ENCODE measurements at regions of chr1 and their contacts with region 1.

Region 1: GRCh38 chr1:234925440-234926263 is 203.0 kb downstream of the TOMM20 start:
- DNase-seq: no peak
- ATAC-seq: peak; percentile 27
- H3K4me3 Mint-ChIP-seq: peak overlapping the region; percentile 59
- H3K27ac Mint-ChIP-seq: peak overlapping the region; percentile 86
- H3K4me1 Mint-ChIP-seq: peaks cover 53% of the 10 kb centered on the region
- H3K27me3 Mint-ChIP-seq: no peaks in the 10 kb centered on the region

Region 2: DNA sequence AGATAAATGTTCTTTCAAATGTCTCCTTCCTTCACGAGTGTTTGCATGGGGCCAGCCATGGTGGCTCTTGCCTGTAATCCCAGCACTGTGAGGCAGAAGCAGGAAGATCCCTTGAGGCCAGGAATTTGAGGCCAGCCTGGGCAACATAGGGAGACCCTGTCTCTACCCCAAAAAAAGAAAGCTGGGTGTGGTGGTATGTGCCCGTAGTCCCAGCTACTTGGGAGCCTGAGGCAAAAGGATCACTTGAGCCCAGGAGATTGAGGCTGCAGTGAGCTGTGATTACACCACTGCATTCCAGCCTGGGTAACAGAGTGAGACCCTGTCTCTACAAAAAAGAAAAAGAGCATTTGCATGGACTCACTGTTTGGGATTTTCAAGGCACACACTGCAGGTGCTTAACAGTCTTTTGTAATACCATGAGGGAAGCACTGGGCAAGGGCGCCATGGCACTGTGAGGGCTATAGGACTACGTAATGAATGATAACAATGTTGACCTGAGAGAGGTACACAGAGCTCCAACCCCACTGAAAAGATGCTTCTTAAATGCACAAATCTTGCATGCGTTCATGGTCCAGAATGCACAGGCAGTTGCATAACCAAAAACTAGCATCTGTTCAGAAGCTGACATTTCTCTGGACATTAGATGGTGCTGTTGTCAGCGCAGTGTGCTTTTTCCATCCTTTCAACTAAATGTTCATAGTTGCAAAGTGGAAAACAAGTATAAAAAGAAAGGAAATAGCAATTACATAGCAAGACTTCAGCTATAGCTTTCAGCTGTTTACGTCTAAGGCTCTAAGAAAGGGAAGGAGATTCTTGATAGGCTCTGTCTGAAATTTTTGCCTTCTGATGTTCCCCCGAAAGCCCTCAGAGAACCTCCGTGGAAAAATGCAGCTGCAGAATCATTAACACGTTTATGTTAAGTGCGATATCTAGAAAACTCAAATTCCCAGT is 438.9 kb before region 1 on chr1:
- CTCF ChIA-PET with region 1: no interaction called
- POLR2A ChIA-PET with region 1: no interaction called
- intact Hi-C with region 1: loop called in 1 of 2 experiments (anchors 1 kb)
- DNase-seq: peak; percentile 61
- ATAC-seq: peak; percentile 16
- H3K4me3 Mint-ChIP-seq: no peak overlapping the region
- H3K27ac Mint-ChIP-seq: peak overlapping the region; percentile 98
- H3K4me1 Mint-ChIP-seq: peaks cover 43% of the 10 kb centered on the region
- H3K27me3 Mint-ChIP-seq: peaks cover 16% of the 10 kb centered on the region

Region 3: DNA sequence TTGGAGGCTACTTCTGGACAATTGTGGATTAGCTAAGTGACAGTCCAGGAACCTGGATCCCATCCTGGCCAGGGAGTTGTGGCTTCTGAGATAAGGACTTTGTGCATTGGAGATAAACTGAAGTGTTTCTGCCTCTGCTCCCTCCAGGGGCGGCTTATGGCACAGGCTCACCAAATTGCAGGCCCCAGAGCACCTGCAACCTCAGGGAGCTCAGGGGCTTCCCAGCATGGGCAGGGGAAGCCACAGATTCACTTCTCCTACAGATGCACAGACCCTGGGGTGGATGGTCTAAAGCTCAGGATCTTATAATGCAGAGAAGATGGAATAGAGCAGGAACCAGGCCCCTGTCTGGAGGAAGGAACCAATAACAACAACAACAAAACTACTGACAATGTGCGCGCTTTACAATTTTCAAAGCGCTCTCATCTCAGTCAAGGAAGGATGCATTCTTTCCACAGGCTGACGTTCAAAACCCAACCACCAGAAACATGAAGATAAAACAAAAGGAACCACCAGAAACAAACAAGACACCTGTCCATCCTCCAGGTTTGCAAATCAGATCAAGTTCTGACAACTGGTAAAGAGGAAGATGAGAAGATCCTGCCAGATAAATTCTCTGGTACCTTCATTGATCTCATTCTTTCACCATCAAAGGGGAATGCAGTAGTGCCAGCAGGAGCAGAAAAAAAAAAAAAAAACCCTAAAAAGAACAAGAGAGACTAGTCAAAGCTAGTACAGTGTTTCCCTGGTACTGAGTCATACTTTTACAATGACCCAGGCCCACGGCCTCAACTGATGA is 194.7 kb before region 1 on chr1:
- CTCF ChIA-PET with region 1: no interaction called
- POLR2A ChIA-PET with region 1: no interaction called
- intact Hi-C with region 1: loop called (anchors 1 kb)
- DNase-seq: peak; percentile 77
- ATAC-seq: peak; percentile 87
- H3K4me3 Mint-ChIP-seq: peak overlapping the region; percentile 32
- H3K27ac Mint-ChIP-seq: peak overlapping the region; percentile 92
- H3K4me1 Mint-ChIP-seq: peaks cover 71% of the 10 kb centered on the region
- H3K27me3 Mint-ChIP-seq: no peaks in the 10 kb centered on the region

Region 4: DNA sequence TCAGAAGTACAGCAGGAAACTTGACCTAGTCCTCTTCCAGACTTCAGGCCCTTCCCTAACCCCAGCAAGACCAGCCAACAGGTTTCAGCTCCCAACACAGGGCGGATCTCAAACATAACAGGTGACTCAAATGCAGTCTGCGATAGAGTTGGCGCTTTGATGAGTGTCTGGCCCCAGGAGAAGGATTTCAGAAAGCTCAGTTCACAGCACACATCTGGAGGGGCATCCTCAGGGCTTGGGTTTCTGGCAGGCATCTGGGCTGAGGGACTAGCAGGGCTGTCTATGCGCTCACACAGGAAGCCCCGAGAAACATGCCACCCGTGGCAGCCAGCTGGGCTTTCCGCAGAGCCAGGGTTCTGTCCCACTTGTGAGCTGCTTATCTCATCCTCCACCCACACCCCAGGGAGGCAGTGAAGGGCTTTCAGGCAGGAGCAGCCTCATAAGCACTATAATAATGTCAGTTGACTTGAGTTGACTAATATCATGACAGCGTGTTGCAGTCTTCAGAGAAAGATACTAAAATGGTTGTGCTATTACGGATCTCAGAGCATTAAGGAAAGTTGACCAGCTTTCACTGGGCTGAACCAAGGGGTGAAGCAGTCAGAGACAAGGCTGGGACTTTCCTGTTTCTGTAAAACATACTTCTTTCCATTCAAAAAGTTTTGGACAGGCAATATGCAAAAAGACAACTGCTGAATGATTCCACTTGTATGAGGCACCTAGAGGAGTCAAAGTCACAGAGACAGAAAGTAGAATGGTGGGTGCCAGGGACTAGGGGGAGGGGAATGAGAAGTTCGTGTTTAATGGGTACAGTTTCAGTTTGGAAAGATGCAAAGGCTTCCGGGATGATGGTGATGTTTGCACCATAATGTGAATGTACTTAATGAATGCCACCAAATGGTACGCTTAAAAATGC is 82.7 kb before region 1 on chr1:
- CTCF ChIA-PET with region 1: interaction called, 6 read pairs
- POLR2A ChIA-PET with region 1: interaction called, 4 read pairs
- intact Hi-C with region 1: loop called (anchors 1 kb)
- DNase-seq: peak; percentile 93
- ATAC-seq: peak; percentile 83
- H3K4me3 Mint-ChIP-seq: peak overlapping the region; percentile 63
- H3K27ac Mint-ChIP-seq: peak overlapping the region; percentile 94
- H3K4me1 Mint-ChIP-seq: peaks cover 85% of the 10 kb centered on the region
- H3K27me3 Mint-ChIP-seq: no peaks in the 10 kb centered on the region

Region 5: DNA sequence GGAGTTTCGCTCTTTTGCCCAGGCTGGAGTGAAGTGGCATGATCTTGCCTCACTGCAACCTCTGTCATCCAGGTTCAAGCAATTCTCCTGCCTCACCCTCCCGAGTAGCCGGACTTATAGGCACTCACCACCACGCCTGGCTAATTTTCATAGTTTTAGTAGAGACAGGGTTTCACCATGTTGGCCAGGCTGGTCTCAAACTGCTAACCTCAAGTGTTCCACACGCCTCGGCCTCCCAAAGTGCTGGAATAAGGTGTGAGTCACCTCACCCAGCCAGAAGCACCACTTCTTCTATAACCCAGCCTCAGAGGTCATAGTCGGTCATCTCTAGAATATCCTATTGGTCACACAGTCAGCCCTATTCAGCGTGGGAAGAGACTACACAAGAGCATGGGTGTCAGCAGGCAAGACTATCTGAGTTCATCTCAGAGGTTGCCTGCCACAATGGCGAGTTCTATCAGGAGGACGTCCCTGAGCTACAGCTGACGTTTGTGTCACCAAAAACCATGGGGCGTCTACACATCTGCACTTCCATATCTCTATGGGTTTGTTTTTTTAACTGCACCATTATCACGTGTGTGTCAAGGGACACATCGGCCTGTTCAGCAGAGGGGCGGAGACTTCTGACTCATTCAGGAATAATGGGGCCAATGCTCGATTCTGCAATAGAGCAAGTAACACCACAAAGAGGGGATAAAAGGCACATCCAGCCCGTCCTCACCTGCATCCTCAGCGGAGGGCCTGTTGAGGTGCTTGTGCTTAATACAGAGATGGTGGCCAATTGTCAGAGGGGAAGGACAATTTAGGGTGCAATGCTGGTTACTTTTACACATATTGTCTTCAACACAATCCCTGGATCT is 59.4 kb before region 1 on chr1:
- CTCF ChIA-PET with region 1: no interaction called
- POLR2A ChIA-PET with region 1: no interaction called
- intact Hi-C with region 1: no loop called
- DNase-seq: peak; percentile 26
- ATAC-seq: peak; percentile 67
- H3K4me3 Mint-ChIP-seq: no peak overlapping the region
- H3K27ac Mint-ChIP-seq: peak overlapping the region; percentile 37
- H3K4me1 Mint-ChIP-seq: peaks cover 20% of the 10 kb centered on the region
- H3K27me3 Mint-ChIP-seq: no peaks in the 10 kb centered on the region

Region 6: GRCh38 chr1:234893725-234894630 is 31.7 kb before region 1 on chr1:
- CTCF ChIA-PET with region 1: no interaction called
- POLR2A ChIA-PET with region 1: no interaction called
- intact Hi-C with region 1: no loop called
- DNase-seq: peak; percentile 73
- ATAC-seq: peak; percentile 91
- H3K4me3 Mint-ChIP-seq: no peak overlapping the region
- H3K27ac Mint-ChIP-seq: peak overlapping the region; percentile 15
- H3K4me1 Mint-ChIP-seq: peaks cover 30% of the 10 kb centered on the region
- H3K27me3 Mint-ChIP-seq: peaks cover 5% of the 10 kb centered on the region

Region 7: GRCh38 chr1:234955107-234955731 is 29.6 kb after region 1 on chr1:
- CTCF ChIA-PET with region 1: interaction called, 3 read pairs
- POLR2A ChIA-PET with region 1: interaction called, 3 read pairs
- intact Hi-C with region 1: loop called in 1 of 2 experiments (anchors 1 kb)
- DNase-seq: peak; percentile 28
- ATAC-seq: peak; percentile 27
- H3K4me3 Mint-ChIP-seq: no peak overlapping the region
- H3K27ac Mint-ChIP-seq: peak overlapping the region; percentile 91
- H3K4me1 Mint-ChIP-seq: peaks cover 64% of the 10 kb centered on the region
- H3K27me3 Mint-ChIP-seq: no peaks in the 10 kb centered on the region

Region 8: DNA sequence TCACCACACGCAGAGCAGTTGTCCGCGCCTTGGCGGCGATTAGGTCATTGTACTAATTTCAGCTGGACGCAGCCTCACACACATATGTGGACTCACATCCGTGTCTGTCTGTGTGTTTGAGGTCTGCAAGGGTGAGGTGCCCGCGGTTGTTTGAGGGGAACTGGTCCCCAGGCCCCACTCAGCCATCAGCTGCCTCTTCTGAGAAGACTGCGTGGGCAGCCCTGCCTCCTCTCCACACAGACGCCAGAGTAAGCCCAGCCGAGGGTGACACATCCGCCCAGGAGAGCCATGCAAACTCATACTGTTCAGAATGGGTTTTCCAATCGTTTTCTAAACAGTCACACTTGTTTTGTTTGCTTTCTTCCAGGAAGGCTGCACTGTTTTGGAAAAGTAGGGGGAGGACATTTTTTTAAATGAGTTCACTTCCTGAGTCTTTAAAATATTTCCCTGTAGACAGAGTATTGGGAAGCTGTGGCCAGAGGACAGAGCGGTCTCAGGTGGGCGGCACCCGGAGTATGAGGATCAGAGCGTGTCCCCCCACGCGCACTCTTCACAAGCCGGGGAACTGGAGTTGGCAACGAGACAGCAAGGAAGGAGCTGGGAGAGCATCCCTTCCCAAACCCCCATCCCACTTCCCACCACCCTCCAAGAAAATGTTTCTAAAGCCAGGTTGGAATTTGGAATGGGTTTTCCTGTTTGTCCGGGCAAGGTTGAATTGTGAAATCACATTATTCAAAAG is 149.7 kb after region 1 on chr1:
- CTCF ChIA-PET with region 1: interaction called, 3 read pairs
- POLR2A ChIA-PET with region 1: no interaction called
- intact Hi-C with region 1: loop called in 1 of 2 experiments (anchors 1 kb)
- DNase-seq: peak; percentile 86
- ATAC-seq: peak; percentile 64
- H3K4me3 Mint-ChIP-seq: peak overlapping the region; percentile 41
- H3K27ac Mint-ChIP-seq: peak overlapping the region; percentile 98
- H3K4me1 Mint-ChIP-seq: peaks cover 28% of the 10 kb centered on the region
- H3K27me3 Mint-ChIP-seq: no peaks in the 10 kb centered on the region

Measured in activated CD4-positive, alpha-beta T cell treated with anti-CD3 and anti-CD28 coated beads for 36 hours (primary cell).